Dendritic cell treated with granulocyte-macrophage colony-stimulating factor and Interleukin-4, amounts not matched to agents 40 ng/mL and 50 ng/mL, for 4 days (primary cell): ENCODE measurements at regions of chr20 and their contacts with region 1.

Region 1: GRCh38 chr20:4082406-4083097 is 67.2 kb upstream of the RNF24 start:
- H3K4me3 Mint-ChIP-seq: peak overlapping the region; percentile 65
- H3K27ac Mint-ChIP-seq: peak overlapping the region; percentile 100
- H3K4me1 Mint-ChIP-seq: peaks cover 68% of the 10 kb centered on the region
- H3K27me3 Mint-ChIP-seq: no peaks in the 10 kb centered on the region

Region 2: GRCh38 chr20:4038047-4038459 is 44.5 kb before region 1 on chr20:
- intact Hi-C with region 1: loop called (anchors 2 kb)
- H3K4me3 Mint-ChIP-seq: peak overlapping the region; percentile 68
- H3K27ac Mint-ChIP-seq: peak overlapping the region; percentile 93
- H3K4me1 Mint-ChIP-seq: peaks cover 51% of the 10 kb centered on the region
- H3K27me3 Mint-ChIP-seq: no peaks in the 10 kb centered on the region